ENCODE measurements at regions of chr13 and their contacts with region 1.

Region 1: GRCh38 chr13:111153279-111153976 is 38.3 kb downstream of the ARHGEF7 start:
- DNase-seq: peak; percentile 83 to 87
- H3K4me3 ChIP-seq: peak overlapping the region; percentile 89
- H3K27ac ChIP-seq: peak overlapping the region; percentile 79
- H3K4me1 ChIP-seq: peaks cover 17% of the 10 kb centered on the region
- H3K27me3 ChIP-seq: peaks cover 22% of the 10 kb centered on the region
- CTCF ChIP-seq: no peak

Region 2: DNA sequence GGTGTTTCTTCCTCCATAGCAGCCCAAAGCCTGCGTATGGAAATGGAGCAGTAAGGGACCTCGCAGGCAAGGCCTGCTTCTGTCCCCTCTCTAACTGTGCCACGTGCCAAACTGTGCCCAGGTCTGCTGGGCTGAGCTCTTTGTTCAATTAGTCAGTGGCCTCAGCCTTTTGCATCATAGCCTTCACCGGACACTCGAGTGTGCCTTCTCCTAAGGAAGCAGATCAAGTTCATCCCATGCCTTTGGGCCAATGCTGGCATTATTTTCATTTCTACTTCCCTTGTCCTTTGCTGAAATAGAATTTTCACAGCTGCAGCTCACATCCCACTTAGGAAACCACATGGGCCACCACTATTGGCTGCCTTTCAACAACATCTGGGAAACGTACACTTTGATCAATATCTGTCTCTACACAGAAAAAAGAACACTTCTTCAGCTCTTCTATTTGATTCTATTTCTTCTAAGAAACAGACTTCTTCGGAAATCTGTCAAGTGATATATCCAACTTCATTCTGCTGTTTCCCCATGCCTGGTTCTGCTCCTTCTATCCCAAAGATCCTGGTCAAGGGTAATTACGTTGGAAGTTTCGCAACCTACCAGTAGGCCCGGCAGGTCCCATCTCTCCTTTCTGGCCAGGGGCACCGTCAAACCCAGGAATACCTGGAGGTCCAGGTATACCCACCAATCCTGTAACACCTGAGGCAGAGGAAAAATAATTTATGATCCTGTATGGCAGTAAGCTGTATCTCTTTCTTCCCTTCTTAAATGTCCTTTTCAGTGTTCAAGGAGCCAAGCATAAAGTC is 990.4 kb before region 1 on chr13:
- CTCF ChIA-PET with region 1: no interaction called
- POLR2A ChIA-PET with region 1: interaction called, 14 read pairs
- intact Hi-C with region 1: no loop called
- DNase-seq: no peak
- H3K4me3 ChIP-seq: no peak overlapping the region
- H3K27ac ChIP-seq: no peak overlapping the region
- H3K4me1 ChIP-seq: peaks cover 31% of the 10 kb centered on the region
- H3K27me3 ChIP-seq: no peaks in the 10 kb centered on the region
- CTCF ChIP-seq: no peak